ENCODE measurements at regions of chrX and their contacts with region 1.

Region 1: GRCh38 chrX:19725641-19726040 is 161.8 kb downstream of the SH3KBP1 start:
- DNase-seq: peak in 2 of 9 donors; percentile 15 to 23
- ATAC-seq: peak; percentile 85
- H3K4me3 ChIP-seq: no peak overlapping the region
- H3K4me3 Mint-ChIP-seq: peak overlapping the region in 8 of 10 donors; percentile 29 to 75 (median 50)
- H3K27ac ChIP-seq: peak overlapping the region; percentile 35
- H3K27ac Mint-ChIP-seq: peak overlapping the region; percentile 57 to 95 (median 79)
- H3K4me1 ChIP-seq: peaks cover 29 to 32% of the 10 kb centered on the region in 2 donors
- H3K4me1 Mint-ChIP-seq: peaks cover 15 to 88% (median 73%) of the 10 kb centered on the region in 7 donors
- H3K27me3 ChIP-seq: no peaks in the 10 kb centered on the region
- H3K27me3 Mint-ChIP-seq: no peaks in the 10 kb centered on the region

Region 2: GRCh38 chrX:19593690-19594089 is 132.0 kb before region 1 on chrX:
- CTCF ChIA-PET with region 1: no interaction called
- POLR2A ChIA-PET with region 1: no interaction called
- intact Hi-C with region 1: loop called in 1 of 2 experiments (anchors 5 kb)
- DNase-seq: peak in 7 of 9 donors; percentile 11 to 36 (median 21)
- ATAC-seq: peak; percentile 50
- H3K4me3 ChIP-seq: no peak overlapping the region
- H3K4me3 Mint-ChIP-seq: no peak overlapping the region
- H3K27ac ChIP-seq: no peak overlapping the region
- H3K27ac Mint-ChIP-seq: peak overlapping the region in 3 of 9 donors; percentile 10 to 66 (median 56)
- H3K4me1 ChIP-seq: no peaks in the 10 kb centered on the region
- H3K4me1 Mint-ChIP-seq: peaks cover 0 to 21% (median 10%) of the 10 kb centered on the region in 7 donors
- H3K27me3 ChIP-seq: no peaks in the 10 kb centered on the region
- H3K27me3 Mint-ChIP-seq: no peaks in the 10 kb centered on the region

Region 3: GRCh38 chrX:20159797-20160385 is 434.2 kb after region 1 on chrX:
- CTCF ChIA-PET with region 1: no interaction called
- POLR2A ChIA-PET with region 1: no interaction called
- intact Hi-C with region 1: no loop called
- DNase-seq: no peak
- ATAC-seq: no peak
- H3K4me3 ChIP-seq: no peak overlapping the region
- H3K4me3 Mint-ChIP-seq: no peak overlapping the region
- H3K27ac ChIP-seq: no peak overlapping the region
- H3K27ac Mint-ChIP-seq: peak overlapping the region in 2 of 9 donors; percentile 27 to 46
- H3K4me1 ChIP-seq: no peaks in the 10 kb centered on the region
- H3K4me1 Mint-ChIP-seq: peaks cover 0 to 7% (median 0%) of the 10 kb centered on the region in 7 donors
- H3K27me3 ChIP-seq: no peaks in the 10 kb centered on the region
- H3K27me3 Mint-ChIP-seq: no peaks in the 10 kb centered on the region